ENCODE measurements at regions of chr11 and their contacts with region 1.

Region 1: GRCh38 chr11:112163875-112164685 is at the start of gene IL18:
- DNase-seq: peak; percentile 84
- total RNA-seq, gene IL18: 7.0 to 11.3 TPM

Region 2: DNA sequence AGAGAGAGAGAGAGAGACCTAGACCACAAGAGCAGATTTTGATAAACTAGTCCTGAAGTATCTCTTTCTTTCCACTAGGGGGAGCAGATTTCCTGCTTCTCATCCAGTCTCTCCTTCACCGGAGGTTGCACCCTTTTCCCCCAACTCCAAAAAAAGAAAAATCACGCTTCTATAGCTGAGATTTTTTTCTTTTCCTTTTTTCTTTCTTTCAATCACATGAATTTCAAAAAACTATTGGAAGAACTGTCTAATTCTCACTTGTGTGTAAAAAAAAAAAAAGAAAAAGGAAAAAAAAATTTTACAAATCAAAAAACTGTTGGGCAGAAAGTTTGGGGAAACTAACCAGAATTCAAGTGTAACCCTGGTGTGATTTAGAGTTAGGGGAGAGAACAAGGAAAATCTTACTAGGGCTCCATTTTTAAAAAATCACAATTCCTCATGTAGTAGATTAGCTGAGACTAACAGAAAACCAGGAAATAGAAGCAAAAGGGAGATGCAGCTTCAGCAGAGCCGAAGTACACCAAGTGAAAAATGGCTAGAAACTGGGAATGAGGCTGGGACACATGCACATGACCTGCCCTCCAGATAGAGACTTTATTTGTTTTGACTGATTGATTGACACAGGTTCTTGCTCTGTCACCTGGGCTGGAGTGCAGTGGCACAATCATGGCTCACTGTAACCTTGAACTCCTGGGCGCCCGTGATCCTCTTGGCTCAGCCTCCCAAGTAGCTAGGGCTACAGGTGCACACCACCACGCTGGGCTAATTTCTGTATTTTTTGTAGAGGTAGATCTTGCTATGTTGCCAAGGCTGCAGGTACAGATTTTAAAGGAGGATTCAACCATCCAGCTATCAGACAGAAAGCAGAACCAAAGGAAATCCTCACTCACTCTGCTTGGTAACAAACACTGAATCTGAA is 50.3 kb before region 1 on chr11:
- intact Hi-C with region 1: loop called (anchors 10 kb)
- DNase-seq: no peak